ENCODE measurements at regions of chr4 and their contacts with region 1.

Region 1: DNA sequence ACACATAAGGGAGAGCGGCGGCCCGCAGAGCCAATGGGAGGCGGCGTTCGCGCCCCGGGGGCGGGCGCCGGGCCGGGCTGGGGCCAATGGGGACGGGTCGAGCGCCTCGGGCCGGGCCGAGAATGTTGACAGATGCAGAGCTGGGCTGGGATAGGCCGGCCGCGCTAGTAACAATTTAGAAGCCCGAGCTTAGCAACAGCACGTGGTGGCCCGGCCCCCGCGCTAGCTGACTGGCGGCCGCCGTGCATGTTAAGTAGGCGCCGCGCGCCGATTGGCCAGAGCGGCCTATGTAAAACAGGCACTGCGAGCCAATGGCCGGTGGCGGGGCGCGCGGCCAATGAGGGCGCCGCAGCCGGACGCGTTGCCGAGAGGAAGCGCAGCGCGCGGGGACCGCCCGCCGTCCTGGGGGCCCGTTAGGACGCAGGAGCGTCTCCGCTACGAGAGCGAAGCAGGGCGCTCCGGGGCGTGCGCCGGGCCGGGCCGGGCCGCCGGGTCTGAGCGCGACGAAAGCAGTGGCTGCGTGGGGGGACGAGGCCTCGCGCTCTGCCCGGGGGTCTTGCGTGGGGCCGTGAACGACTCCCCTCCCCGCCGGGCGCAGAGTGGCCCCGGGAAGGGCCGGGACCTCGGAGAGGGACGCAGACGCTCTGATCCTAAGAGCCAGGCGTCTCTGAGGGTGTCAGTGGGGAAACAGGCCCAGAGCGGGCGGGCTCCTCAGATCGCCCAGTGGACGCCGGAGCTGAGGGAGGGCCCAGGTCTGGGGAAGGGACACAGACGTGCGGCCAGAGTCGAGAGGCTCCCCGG is 434 bp upstream of the MXD4 start:
- DNase-seq: peak; percentile 100
- H3K4me3 ChIP-seq: peak overlapping the region; percentile 98
- H3K27ac ChIP-seq: peak overlapping the region; percentile 87 to 96
- H3K4me1 ChIP-seq: peaks cover 38 to 56% of the 10 kb centered on the region in 2 donors
- H3K27me3 ChIP-seq: no peaks in the 10 kb centered on the region
- CTCF ChIP-seq: no peak

Region 2: DNA sequence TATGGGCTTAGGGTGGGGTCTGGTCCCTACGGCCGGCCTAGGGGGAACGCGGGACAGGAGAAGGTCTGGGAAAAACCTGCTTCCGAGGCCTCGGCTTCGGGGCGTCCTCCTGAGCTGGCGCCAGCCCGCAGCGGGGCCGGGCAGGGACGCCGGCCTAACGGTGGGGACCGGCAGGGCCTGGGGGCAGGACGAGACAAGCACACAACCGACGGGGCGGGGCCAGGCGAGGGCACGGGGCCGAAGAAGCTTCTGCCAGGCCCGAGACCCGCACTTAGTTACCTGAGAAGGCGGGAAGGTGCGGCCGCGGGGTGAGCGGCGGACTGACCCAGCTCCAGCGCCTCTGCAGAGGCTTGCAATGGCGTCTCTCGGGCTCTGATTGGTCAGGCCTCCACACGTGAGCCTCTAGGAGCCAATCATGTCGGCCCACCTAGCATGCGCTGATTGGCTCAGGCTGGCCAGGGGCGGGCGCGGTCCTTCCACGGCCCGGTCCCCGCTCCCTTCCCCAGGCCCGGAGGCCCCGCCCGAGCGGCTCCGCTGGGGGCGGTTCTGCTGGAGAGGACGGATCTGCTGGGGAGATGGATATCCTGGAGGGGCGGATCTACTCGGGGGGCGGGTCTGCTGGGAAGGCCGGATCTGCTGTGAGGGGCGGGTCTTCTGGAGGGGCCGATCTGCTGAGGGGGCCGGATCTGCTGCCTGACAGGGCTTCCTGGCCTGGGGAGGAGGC is 1480.7 kb before region 1 on chr4:
- intact Hi-C with region 1: loop called (anchors 5 kb)
- DNase-seq: peak; percentile 99
- H3K4me3 ChIP-seq: peak overlapping the region; percentile 87 to 97
- H3K27ac ChIP-seq: peak overlapping the region; percentile 92 to 94
- H3K4me1 ChIP-seq: peaks cover 8 to 31% of the 10 kb centered on the region in 2 donors
- H3K27me3 ChIP-seq: peaks cover 14% of the 10 kb centered on the region
- CTCF ChIP-seq: no peak

Region 3: GRCh38 chr4:1870578-1871443 is 391.5 kb before region 1 on chr4 and contains the start of gene NSD2:
- intact Hi-C with region 1: loop called (anchors 10 kb)
- DNase-seq: peak; percentile 35 to 93
- H3K4me3 ChIP-seq: peak within 1 kb of the TSS; percentile 99 to 100
- H3K27ac ChIP-seq: peak within 1 kb of the TSS; percentile 98 to 99
- H3K4me1 ChIP-seq: peaks cover 4 to 5% of the 10 kb centered on the region in 2 donors
- H3K27me3 ChIP-seq: no peaks in the 10 kb centered on the region
- CTCF ChIP-seq: no peak
- total RNA-seq, gene NSD2: 19.9 TPM

Region 4: DNA sequence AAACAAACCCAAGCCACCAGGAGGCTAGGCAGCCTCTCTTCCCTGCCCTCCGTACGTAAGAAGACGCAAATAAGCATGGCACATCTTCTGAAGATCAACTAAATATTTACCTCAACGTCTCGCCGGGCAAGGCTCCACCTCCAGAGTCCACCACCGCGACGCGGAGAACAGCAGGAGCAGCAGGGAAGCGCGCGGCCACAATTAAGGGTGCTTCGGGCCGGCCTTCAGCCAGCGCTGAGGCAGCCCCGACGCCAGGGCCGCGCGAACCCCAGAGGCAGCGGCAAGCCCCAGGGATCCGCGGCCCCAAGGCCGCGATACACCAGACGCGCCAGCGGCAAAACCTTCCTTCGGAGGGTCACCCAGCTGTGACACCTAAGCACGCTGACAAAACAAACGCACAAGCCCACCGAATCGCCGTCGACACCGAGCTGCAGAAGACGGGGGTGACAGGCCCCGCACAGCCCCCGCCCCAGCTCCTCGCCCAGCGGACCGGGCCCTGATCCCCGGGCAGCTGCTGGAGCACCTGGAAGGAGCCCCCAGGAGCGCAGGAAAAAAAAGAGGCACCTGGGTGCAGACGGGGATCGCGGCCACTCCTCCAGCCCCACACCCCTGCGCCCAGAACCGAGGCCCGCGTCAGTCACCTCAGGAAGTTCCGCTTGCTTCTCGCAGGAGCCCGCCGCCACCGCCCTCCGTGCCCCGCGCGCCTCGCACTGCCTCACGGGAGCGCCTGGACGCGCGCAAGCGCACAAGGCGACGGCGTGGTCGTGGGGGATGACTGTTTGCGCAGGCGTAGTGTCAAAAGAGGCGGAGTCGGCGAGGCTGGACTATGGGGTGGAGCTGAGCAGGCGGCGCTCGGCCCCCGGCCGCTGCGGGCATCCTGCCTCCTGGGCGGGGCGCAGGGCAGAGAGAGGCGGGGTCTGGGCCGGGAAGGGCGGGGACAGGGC is 20.7 kb before region 1 on chr4 and contains the starts of genes HAUS3 and POLN:
- intact Hi-C with region 1: loop called (anchors 1 kb)
- DNase-seq: peak; percentile 90 to 99
- H3K4me3 ChIP-seq: peak within 1 kb of the TSS; percentile 65 to 97
- H3K27ac ChIP-seq: peak within 1 kb of the TSS; percentile 60 to 69
- H3K4me1 ChIP-seq: peaks cover 6 to 37% of the 10 kb centered on the region in 2 donors
- H3K27me3 ChIP-seq: no peaks in the 10 kb centered on the region
- CTCF ChIP-seq: no peak
- total RNA-seq, gene HAUS3: 9.0 TPM
- total RNA-seq, gene POLN: 0.21 TPM

Region 5: DNA sequence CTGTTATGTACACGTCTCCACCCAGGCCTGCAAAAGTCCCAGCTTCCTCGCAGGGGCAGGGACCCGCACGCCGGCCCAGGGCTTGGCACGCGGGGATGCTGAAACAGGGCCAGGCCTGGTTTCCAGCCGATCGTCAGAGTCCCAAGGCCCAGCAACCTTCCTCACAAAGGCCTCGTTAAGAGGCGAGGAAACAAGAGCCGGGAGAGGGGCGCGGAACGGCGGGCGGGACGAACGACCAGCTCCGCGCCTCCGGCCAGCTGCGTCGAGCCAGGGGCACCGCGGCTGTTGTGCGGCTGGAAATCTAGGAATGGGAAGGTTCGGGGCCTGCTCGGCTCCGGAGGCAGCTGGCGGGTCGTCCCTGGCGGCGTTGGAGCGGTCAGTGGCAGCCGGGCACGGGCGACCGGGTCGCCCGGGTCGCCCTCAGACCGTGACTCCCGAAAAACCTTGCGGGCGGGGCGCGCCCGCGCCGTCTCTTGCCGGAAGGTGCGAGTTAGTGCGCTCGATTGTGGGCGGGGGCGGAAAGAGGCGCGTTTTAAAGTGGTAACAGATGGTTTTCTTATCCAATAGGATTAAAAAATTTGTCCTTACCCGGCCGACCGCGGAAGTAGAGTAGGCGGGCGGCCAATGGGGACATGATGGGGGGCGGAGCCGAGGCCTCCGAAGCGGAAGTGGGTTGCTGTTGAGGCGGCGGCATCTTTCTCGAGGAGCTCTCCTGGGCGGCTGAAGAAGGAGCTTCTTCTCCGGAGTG is 206.3 kb after region 1 on chr4 and contains the start of gene RNF4:
- intact Hi-C with region 1: loop called (anchors 1 kb)
- DNase-seq: peak; percentile 86 to 98
- H3K4me3 ChIP-seq: peak within 1 kb of the TSS; percentile 84 to 95
- H3K27ac ChIP-seq: peak within 1 kb of the TSS; percentile 81 to 91
- H3K4me1 ChIP-seq: peaks cover 3 to 18% of the 10 kb centered on the region in 2 donors
- H3K27me3 ChIP-seq: no peaks in the 10 kb centered on the region
- CTCF ChIP-seq: no peak
- total RNA-seq, gene RNF4: 19.3 TPM

Region 6: GRCh38 chr4:2755837-2756694 is 493.7 kb after region 1 on chr4 and contains the start of gene TNIP2:
- intact Hi-C with region 1: loop called (anchors 10 kb)
- DNase-seq: peak in 1 of 2 donors; percentile 92
- H3K4me3 ChIP-seq: peak within 1 kb of the TSS; percentile 90 to 95
- H3K27ac ChIP-seq: peak within 1 kb of the TSS; percentile 82 to 87
- H3K4me1 ChIP-seq: peaks cover 4 to 10% of the 10 kb centered on the region in 2 donors
- H3K27me3 ChIP-seq: no peaks in the 10 kb centered on the region
- CTCF ChIP-seq: peak; percentile 11 to 59 (median 28)
- total RNA-seq, gene TNIP2: 65.6 TPM

Region 7: GRCh38 chr4:3074078-3074795 is 811.9 kb after region 1 on chr4 and contains the starts of genes HTT and HTT-AS:
- intact Hi-C with region 1: loop called (anchors 5 kb)
- DNase-seq: peak; percentile 80 to 97
- H3K4me3 ChIP-seq: peak within 1 kb of the TSS; percentile 95 to 99
- H3K27ac ChIP-seq: peak within 1 kb of the TSS; percentile 86 to 98
- H3K4me1 ChIP-seq: peaks cover 12 to 14% of the 10 kb centered on the region in 2 donors
- H3K27me3 ChIP-seq: no peaks in the 10 kb centered on the region
- CTCF ChIP-seq: no peak
- total RNA-seq, gene HTT: 23.7 TPM
- total RNA-seq, gene HTT-AS: not detected